ENCODE measurements at regions of chr4 and their contacts with region 1.

Region 1: GRCh38 chr4:177250056-177250696 is 59.5 kb upstream of the NEIL3 start:
- DNase-seq: peak; percentile 79
- H3K4me3 Mint-ChIP-seq: no peak overlapping the region
- H3K27ac Mint-ChIP-seq: no peak overlapping the region
- H3K4me1 Mint-ChIP-seq: peaks cover 10% of the 10 kb centered on the region
- H3K27me3 Mint-ChIP-seq: peaks cover 22% of the 10 kb centered on the region

Region 2: DNA sequence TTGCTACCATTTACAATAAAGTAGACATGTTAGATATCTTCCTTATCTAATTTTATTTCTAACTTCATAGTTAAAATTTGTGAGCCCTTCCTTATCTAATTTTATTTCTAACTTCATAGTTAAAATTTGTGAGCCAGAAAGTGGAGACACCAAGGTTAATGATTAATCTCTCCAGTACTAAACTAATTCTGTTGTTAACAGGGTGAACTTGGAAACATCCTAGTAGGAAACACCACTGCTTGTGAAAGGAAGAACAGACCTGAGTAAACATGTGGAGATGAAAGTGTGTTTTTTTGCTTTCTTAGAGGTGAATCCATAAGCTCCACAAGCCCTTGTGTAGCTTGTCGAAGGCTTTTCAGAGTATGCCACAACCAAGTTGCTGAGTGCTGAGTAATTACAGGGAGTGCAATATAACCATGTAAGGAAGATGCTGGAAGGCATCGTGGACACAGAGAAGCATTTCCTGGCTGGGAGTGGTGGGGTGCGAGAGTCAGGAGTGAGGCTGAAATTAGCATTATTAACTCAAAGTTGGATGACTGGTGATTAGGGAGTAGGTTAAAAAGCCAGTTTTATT is 59.1 kb before region 1 on chr4:
- CTCF ChIA-PET with region 1: no interaction called
- DNase-seq: no peak
- H3K4me3 Mint-ChIP-seq: no peak overlapping the region
- H3K27ac Mint-ChIP-seq: no peak overlapping the region
- H3K4me1 Mint-ChIP-seq: no peaks in the 10 kb centered on the region
- H3K27me3 Mint-ChIP-seq: no peaks in the 10 kb centered on the region

Region 3: GRCh38 chr4:177229331-177229730 is 20.8 kb before region 1 on chr4:
- CTCF ChIA-PET with region 1: no interaction called
- DNase-seq: no peak
- H3K4me3 Mint-ChIP-seq: peak overlapping the region; percentile 16
- H3K27ac Mint-ChIP-seq: peak overlapping the region; percentile 2
- H3K4me1 Mint-ChIP-seq: peaks cover 5% of the 10 kb centered on the region
- H3K27me3 Mint-ChIP-seq: no peaks in the 10 kb centered on the region

Region 4: DNA sequence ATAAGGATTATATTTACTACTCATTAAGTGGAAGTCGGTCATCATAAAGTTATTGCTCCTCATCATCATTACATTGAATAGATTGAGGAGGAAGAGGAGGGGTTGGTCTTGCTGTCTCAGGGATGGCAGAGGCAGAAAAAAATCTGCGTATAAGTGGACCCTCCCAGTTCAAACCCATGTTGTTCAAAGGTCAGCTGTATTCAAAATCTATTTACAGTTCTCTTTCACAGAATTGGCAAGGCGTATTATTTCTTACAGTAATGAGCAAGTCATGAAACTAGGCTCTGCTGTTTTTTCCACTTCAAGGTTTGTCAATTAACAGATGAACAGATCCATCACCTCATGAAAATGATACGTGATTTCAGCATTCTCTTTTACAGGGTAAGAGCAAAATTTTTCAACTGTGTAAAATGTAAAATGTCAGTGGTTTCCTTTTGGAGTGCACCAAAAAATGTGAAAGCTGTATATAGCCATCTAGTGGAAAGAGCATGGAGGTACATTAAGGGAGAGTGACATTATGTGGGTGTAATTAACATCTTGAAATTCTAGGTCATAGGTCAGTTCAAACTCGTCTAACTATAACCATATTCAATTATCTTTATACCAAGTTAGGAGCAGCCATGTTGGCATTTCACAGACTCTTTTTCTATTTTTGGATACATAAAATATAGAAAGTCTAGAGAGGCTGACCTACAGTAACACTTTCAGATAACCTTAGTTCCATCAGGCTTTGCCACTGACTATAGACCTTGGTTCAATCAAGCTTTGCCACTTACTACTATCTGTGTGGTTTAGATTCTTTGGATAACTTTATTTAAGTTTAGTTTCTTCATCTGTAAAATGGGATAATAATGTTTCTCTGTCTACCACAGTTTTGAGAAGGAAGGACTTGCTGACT is 89.5 kb after region 1 on chr4:
- CTCF ChIA-PET with region 1: interaction called, 68 read pairs
- DNase-seq: no peak
- H3K4me3 Mint-ChIP-seq: no peak overlapping the region
- H3K27ac Mint-ChIP-seq: peak overlapping the region; percentile 69
- H3K4me1 Mint-ChIP-seq: peaks cover 6% of the 10 kb centered on the region
- H3K27me3 Mint-ChIP-seq: no peaks in the 10 kb centered on the region

Region 5: DNA sequence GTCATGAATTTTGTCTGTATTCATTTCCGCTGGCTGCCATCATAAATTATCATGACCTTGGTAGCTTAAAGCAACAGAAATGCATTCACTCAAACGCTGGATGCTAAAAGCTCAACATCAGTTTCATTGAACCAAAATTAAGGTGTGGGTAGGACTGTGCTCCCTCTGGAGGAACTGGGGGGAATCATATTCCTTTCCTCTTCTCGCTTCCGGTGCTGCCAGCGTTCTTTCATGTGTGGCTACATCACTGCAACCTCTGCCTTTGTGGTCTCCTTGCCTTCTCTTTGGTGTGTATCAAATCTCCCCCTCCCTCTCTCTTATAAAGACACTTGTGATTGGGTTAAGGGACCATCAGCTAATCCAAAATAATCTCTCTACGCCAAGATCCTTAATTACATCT is 99.0 kb after region 1 on chr4:
- CTCF ChIA-PET with region 1: interaction called, 10 read pairs
- DNase-seq: no peak
- H3K4me3 Mint-ChIP-seq: no peak overlapping the region
- H3K27ac Mint-ChIP-seq: no peak overlapping the region
- H3K4me1 Mint-ChIP-seq: no peaks in the 10 kb centered on the region
- H3K27me3 Mint-ChIP-seq: no peaks in the 10 kb centered on the region

Region 6: GRCh38 chr4:177380730-177381287 is 130.6 kb after region 1 on chr4:
- CTCF ChIA-PET with region 1: interaction called, 10 read pairs
- DNase-seq: no peak
- H3K4me3 Mint-ChIP-seq: no peak overlapping the region
- H3K27ac Mint-ChIP-seq: no peak overlapping the region
- H3K4me1 Mint-ChIP-seq: peaks cover 3% of the 10 kb centered on the region
- H3K27me3 Mint-ChIP-seq: peaks cover 12% of the 10 kb centered on the region

Measured in activated naive CD4-positive, alpha-beta T cell treated with anti-CD3 and anti-CD28 coated beads, Interleukin-2, amount 10 ng/mL, durations not matched to agents 7 days and 5 days (primary cell).